ENCODE measurements at regions of chr13 and their contacts with region 1.

Region 1: GRCh38 chr13:60431108-60431700 is 34.2 kb downstream of the TDRD3 start:
- DNase-seq: no peak
- ATAC-seq: peak; percentile 78
- H3K4me3 ChIP-seq: no peak overlapping the region
- H3K27ac ChIP-seq: no peak overlapping the region
- H3K4me1 ChIP-seq: no peaks in the 10 kb centered on the region
- H3K27me3 ChIP-seq: no peaks in the 10 kb centered on the region

Region 2: DNA sequence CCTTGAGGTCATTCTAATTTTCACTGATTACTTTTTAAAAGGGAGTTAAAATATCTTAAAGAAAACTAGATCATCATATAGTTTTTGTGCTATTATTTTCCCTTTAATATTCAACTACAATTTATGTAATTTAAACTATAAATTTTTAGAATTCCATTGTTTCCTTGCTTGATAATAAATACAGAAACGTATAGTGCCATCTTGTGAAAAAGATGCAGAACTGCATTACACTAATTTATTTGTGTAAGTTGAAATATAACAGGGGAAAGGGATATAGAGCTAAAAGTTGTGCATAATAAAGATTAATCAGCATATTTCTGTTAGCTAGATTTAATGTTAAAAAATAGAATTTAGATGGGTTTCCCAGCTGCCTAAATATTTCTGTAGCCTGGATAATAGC is 95.7 kb before region 1 on chr13:
- intact Hi-C with region 1: loop called in 1 of 2 experiments (anchors 10 kb)
- DNase-seq: no peak
- ATAC-seq: no peak
- H3K4me3 ChIP-seq: no peak overlapping the region
- H3K27ac ChIP-seq: no peak overlapping the region
- H3K4me1 ChIP-seq: no peaks in the 10 kb centered on the region
- H3K27me3 ChIP-seq: no peaks in the 10 kb centered on the region

Region 3: DNA sequence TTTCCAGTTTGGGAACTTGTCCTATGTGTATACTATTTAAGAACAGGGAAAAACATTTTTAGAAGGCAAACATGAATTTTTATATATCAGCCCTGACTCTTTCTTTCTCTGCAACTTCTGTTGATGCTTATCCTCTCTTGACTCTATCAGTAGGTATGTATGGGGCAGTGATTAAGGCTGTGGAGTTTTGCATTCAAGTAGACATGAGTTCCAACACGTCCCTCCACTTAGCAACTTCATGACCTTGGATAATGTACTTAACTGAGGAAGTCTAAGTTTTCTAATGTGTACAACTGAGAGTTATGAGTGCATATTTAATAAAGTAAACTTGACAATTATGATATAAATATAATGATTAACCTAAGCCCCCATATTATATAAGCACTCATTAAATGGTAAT is 380.4 kb after region 1 on chr13:
- intact Hi-C with region 1: no loop called
- DNase-seq: no peak
- ATAC-seq: no peak
- H3K4me3 ChIP-seq: no peak overlapping the region
- H3K27ac ChIP-seq: no peak overlapping the region
- H3K4me1 ChIP-seq: peaks cover 1 to 9% of the 10 kb centered on the region in 2 donors
- H3K27me3 ChIP-seq: no peaks in the 10 kb centered on the region

Measured in aorta (tissue), 5 donors.